ENCODE measurements at regions of chr5 and their contacts with region 1.

Region 1: GRCh38 chr5:157204765-157205164 is 24.1 kb downstream of the ITK start:
- DNase-seq: no peak
- ATAC-seq: peak; percentile 68
- H3K4me3 Mint-ChIP-seq: no peak overlapping the region
- H3K27ac Mint-ChIP-seq: peak overlapping the region; percentile 53
- H3K4me1 Mint-ChIP-seq: peaks cover 6% of the 10 kb centered on the region
- H3K27me3 Mint-ChIP-seq: no peaks in the 10 kb centered on the region
- CTCF ChIP-seq: no peak

Region 2: DNA sequence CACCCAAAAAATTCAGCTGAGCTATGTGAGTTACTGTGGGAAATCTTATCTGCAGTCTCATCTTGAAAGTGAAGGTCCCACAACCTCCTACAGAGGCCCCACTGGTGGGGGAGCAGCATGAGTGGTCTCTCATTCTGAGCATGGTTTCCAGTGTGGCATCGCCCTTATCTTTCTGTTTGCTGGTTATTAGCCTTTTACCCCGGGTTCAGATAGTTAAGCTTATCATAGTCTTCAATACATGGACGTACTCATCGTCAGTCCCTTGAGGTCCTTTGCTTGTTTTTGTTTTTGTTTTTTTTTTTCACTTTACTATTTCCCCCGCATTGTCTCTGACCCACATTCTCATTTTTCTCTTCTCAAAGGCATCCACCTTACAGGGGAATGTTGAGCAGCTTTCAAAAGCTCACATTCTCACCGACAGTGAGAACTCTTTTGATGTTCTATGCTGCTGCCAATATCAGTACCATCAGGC is 88.2 kb before region 1 on chr5:
- CTCF ChIA-PET with region 1: no interaction called
- POLR2A ChIA-PET with region 1: no interaction called
- intact Hi-C with region 1: no loop called
- DNase-seq: no peak
- ATAC-seq: no peak
- H3K4me3 Mint-ChIP-seq: no peak overlapping the region
- H3K27ac Mint-ChIP-seq: no peak overlapping the region
- H3K4me1 Mint-ChIP-seq: no peaks in the 10 kb centered on the region
- H3K27me3 Mint-ChIP-seq: no peaks in the 10 kb centered on the region
- CTCF ChIP-seq: no peak

Region 3: GRCh38 chr5:157178966-157179365 is 25.8 kb before region 1 on chr5:
- CTCF ChIA-PET with region 1: no interaction called
- POLR2A ChIA-PET with region 1: no interaction called
- intact Hi-C with region 1: no loop called
- DNase-seq: no peak
- ATAC-seq: no peak
- H3K4me3 Mint-ChIP-seq: no peak overlapping the region
- H3K27ac Mint-ChIP-seq: no peak overlapping the region
- H3K4me1 Mint-ChIP-seq: peaks cover 6% of the 10 kb centered on the region
- H3K27me3 Mint-ChIP-seq: no peaks in the 10 kb centered on the region
- CTCF ChIP-seq: no peak

Region 4: DNA sequence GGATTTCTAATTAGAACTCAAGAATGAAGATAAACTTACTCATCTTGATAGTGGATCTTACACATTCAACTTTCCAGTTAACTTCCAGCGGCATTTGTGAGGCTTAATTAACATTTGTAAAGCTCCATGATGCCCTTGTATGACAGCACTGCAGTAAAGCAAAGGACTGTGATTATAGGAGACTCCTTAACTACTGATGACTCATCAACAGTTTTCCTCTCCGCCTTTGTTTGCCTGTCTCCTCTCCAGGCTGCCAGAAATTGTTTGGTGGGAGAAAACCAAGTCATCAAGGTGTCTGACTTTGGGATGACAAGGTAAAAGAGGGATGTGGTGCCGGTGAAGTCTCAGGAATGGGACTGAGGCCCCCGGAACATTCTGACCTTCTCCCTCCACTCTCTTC is 40.7 kb after region 1 on chr5:
- CTCF ChIA-PET with region 1: no interaction called
- POLR2A ChIA-PET with region 1: interaction called, 3 read pairs
- intact Hi-C with region 1: loop called (anchors 5 kb)
- DNase-seq: no peak
- ATAC-seq: no peak
- H3K4me3 Mint-ChIP-seq: no peak overlapping the region
- H3K27ac Mint-ChIP-seq: no peak overlapping the region
- H3K4me1 Mint-ChIP-seq: peaks cover 11% of the 10 kb centered on the region
- H3K27me3 Mint-ChIP-seq: no peaks in the 10 kb centered on the region
- CTCF ChIP-seq: no peak

Region 5: DNA sequence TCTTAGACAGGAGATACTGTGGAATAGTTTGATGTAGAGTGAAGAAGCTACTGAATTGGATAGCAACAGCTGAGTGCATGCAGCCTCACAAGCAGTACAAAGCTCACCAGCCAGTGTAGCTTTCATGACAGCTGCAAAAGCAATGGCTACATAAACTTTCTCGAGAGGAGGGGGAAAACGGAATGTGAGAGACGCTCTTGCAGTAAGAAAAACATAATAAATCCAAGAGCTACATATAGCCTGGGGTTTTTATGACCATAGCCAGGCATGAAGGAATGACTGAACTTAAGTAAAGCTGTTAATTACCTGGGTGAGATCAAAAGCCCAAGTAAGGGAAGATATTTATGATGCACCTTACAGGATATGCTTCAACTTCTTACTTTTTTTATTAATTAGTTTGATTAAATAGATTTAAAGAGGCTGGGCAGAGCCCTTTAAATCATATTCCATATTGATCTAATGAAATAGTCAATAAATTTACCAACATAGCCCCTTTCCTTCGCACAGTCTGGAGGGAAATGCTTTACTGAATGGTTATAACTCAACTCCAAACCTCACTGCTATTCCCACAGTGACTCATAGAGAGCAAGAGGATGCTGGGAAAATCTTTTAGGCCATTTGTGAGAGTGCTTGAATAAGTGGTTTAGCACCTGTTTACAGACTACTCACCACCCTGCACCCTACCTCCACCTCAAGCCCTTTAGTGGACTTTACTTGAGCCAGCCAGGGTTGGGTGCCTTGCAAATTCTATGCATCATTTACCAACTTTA is 1061.4 kb after region 1 on chr5:
- CTCF ChIA-PET with region 1: no interaction called
- POLR2A ChIA-PET with region 1: interaction called, 10 read pairs
- intact Hi-C with region 1: no loop called
- DNase-seq: no peak
- ATAC-seq: no peak
- H3K4me3 Mint-ChIP-seq: no peak overlapping the region
- H3K27ac Mint-ChIP-seq: no peak overlapping the region
- H3K4me1 Mint-ChIP-seq: peaks cover 3% of the 10 kb centered on the region
- H3K27me3 Mint-ChIP-seq: no peaks in the 10 kb centered on the region
- CTCF ChIP-seq: no peak